ENCODE measurements at regions of chr4 and their contacts with region 1.

Region 1: GRCh38 chr4:4492161-4492847 is 49.5 kb downstream of the STX18 start:
- DNase-seq: peak; percentile 59
- CTCF ChIP-seq: no peak

Region 2: GRCh38 chr4:4362991-4363697 is 129.2 kb before region 1 on chr4:
- in situ Hi-C with region 1: no loop called
- DNase-seq: no peak
- CTCF ChIP-seq: no peak

Region 3: GRCh38 chr4:4859390-4859842 is 367.1 kb after region 1 on chr4 and contains the start of gene MSX1:
- in situ Hi-C with region 1: loop called (anchors 10 kb)
- DNase-seq: peak; percentile 94
- CTCF ChIP-seq: no peak

Measured in GM13977 (cell line).